Caco-2 (cell line): ENCODE measurements at regions of chr10 and their contacts with region 1.

Region 1: GRCh38 chr10:230737-231136 is 95.5 kb downstream of the ZMYND11 start:
- DNase-seq: peak in 1 of 2 experiments; percentile 34
- H3K4me3 ChIP-seq: no peak overlapping the region
- H3K4me3 Mint-ChIP-seq: no peak overlapping the region
- H3K27ac Mint-ChIP-seq: no peak overlapping the region
- H3K4me1 ChIP-seq: no peaks in the 10 kb centered on the region
- H3K4me1 Mint-ChIP-seq: no peaks in the 10 kb centered on the region
- H3K27me3 ChIP-seq: no peaks in the 10 kb centered on the region
- H3K27me3 Mint-ChIP-seq: no peaks in the 10 kb centered on the region
- CTCF ChIP-seq: peak; percentile 75 to 79

Region 2: GRCh38 chr10:178208-178607 is 52.5 kb before region 1 on chr10:
- CTCF ChIA-PET with region 1: no interaction called
- POLR2A ChIA-PET with region 1: no interaction called
- intact Hi-C with region 1: loop called (anchors 1 kb)
- DNase-seq: no peak
- H3K4me3 ChIP-seq: no peak overlapping the region
- H3K4me3 Mint-ChIP-seq: no peak overlapping the region
- H3K27ac Mint-ChIP-seq: no peak overlapping the region
- H3K4me1 ChIP-seq: no peaks in the 10 kb centered on the region
- H3K4me1 Mint-ChIP-seq: no peaks in the 10 kb centered on the region
- H3K27me3 ChIP-seq: no peaks in the 10 kb centered on the region
- H3K27me3 Mint-ChIP-seq: no peaks in the 10 kb centered on the region
- CTCF ChIP-seq: peak; percentile 41 to 46

Region 3: DNA sequence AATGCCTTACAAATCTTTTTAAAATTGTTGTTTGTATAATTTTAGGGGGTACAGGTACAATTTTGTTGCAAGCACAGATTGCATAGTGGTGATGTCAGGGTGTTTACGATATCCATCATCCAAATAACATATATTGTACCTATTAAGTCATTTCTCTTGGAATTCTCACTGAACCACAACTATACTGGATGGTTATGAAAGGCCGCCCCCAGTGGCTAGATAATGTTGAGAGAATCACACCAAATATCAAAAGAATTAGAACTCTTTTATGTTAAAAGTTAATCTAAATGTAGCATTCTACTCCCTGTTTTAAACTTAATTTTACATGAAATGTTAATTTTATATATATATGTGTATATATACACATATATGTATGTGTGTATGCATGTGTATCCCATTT is 1662.5 kb after region 1 on chr10:
- CTCF ChIA-PET with region 1: no interaction called
- POLR2A ChIA-PET with region 1: no interaction called
- intact Hi-C with region 1: no loop called
- DNase-seq: no peak
- H3K4me3 ChIP-seq: no peak overlapping the region
- H3K4me3 Mint-ChIP-seq: no peak overlapping the region
- H3K27ac Mint-ChIP-seq: no peak overlapping the region
- H3K4me1 ChIP-seq: no peaks in the 10 kb centered on the region
- H3K4me1 Mint-ChIP-seq: no peaks in the 10 kb centered on the region
- H3K27me3 ChIP-seq: no peaks in the 10 kb centered on the region
- H3K27me3 Mint-ChIP-seq: peaks cover 19% of the 10 kb centered on the region
- CTCF ChIP-seq: no peak